Tibial artery (tissue), 4 donors: ENCODE measurements at regions of chr7 and their contacts with region 1.

Region 1: DNA sequence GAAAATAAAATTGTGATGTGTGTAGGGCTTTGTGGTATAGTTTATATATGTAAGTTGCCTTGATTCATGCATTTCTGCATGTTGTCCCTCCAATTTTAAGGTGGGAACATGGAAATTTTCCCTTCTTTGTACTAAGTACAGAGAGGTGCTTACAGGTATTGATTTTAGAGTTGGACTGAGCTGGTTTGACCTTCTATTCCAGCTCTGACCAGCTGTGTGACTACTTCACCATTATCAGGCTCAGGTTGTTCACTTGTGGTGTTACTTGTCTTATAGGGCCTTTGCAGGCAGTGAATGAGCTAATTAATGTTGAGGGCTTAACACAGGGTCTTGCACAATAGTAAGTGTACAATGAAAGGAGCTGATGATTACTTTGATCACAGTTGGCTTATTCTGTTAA is 16.3 kb downstream of the ZNF804B start:
- DNase-seq: no peak
- H3K4me3 ChIP-seq: no peak overlapping the region
- H3K27ac ChIP-seq: no peak overlapping the region
- H3K4me1 ChIP-seq: no peaks in the 10 kb centered on the region
- H3K27me3 ChIP-seq: no peaks in the 10 kb centered on the region
- CTCF ChIP-seq: no peak

Region 2: GRCh38 chr7:88795553-88795952 is 19.7 kb after region 1 on chr7 and contains the start of gene TEX47:
- intact Hi-C with region 1: loop called (anchors 1 kb)
- DNase-seq: no peak
- H3K4me3 ChIP-seq: no peak within 1 kb of the TSS
- H3K27ac ChIP-seq: no peak within 1 kb of the TSS
- H3K4me1 ChIP-seq: no peaks in the 10 kb centered on the region
- H3K27me3 ChIP-seq: no peaks in the 10 kb centered on the region
- CTCF ChIP-seq: no peak